CD8-positive, alpha-beta T cell (primary cell): ENCODE measurements at regions of chr12 and their contacts with region 1.

Region 1: GRCh38 chr12:32777159-32777558 is 21.5 kb upstream of the YARS2 start:
- DNase-seq: no peak
- ATAC-seq: no peak
- H3K4me3 ChIP-seq: no peak overlapping the region
- H3K4me3 Mint-ChIP-seq: no peak overlapping the region
- H3K27ac ChIP-seq: no peak overlapping the region
- H3K27ac Mint-ChIP-seq: no peak overlapping the region
- H3K4me1 ChIP-seq: no peaks in the 10 kb centered on the region
- H3K4me1 Mint-ChIP-seq: no peaks in the 10 kb centered on the region
- H3K27me3 ChIP-seq: no peaks in the 10 kb centered on the region
- H3K27me3 Mint-ChIP-seq: peaks cover 13% of the 10 kb centered on the region
- CTCF ChIP-seq: no peak

Region 2: GRCh38 chr12:32828552-32828951 is 51.4 kb after region 1 on chr12:
- CTCF ChIA-PET with region 1: no interaction called
- POLR2A ChIA-PET with region 1: no interaction called
- intact Hi-C with region 1: loop called in 1 of 2 experiments (anchors 5 kb)
- DNase-seq: no peak
- ATAC-seq: no peak
- H3K4me3 ChIP-seq: no peak overlapping the region
- H3K4me3 Mint-ChIP-seq: no peak overlapping the region
- H3K27ac ChIP-seq: no peak overlapping the region
- H3K27ac Mint-ChIP-seq: no peak overlapping the region
- H3K4me1 ChIP-seq: no peaks in the 10 kb centered on the region
- H3K4me1 Mint-ChIP-seq: no peaks in the 10 kb centered on the region
- H3K27me3 ChIP-seq: no peaks in the 10 kb centered on the region
- H3K27me3 Mint-ChIP-seq: peaks cover 3% of the 10 kb centered on the region
- CTCF ChIP-seq: no peak

Region 3: GRCh38 chr12:32970465-32971110 is 193.4 kb after region 1 on chr12:
- CTCF ChIA-PET with region 1: no interaction called
- POLR2A ChIA-PET with region 1: no interaction called
- intact Hi-C with region 1: no loop called
- DNase-seq: no peak
- ATAC-seq: no peak
- H3K4me3 ChIP-seq: no peak overlapping the region
- H3K4me3 Mint-ChIP-seq: no peak overlapping the region
- H3K27ac ChIP-seq: no peak overlapping the region
- H3K27ac Mint-ChIP-seq: no peak overlapping the region
- H3K4me1 ChIP-seq: no peaks in the 10 kb centered on the region
- H3K4me1 Mint-ChIP-seq: no peaks in the 10 kb centered on the region
- H3K27me3 ChIP-seq: no peaks in the 10 kb centered on the region
- H3K27me3 Mint-ChIP-seq: no peaks in the 10 kb centered on the region
- CTCF ChIP-seq: no peak